ENCODE measurements at regions of chr1 and their contacts with region 1.

Region 1: GRCh38 chr1:28807986-28808385 is 4.0 kb upstream of the OPRD1 start:
- DNase-seq: no peak
- H3K4me3 ChIP-seq: no peak overlapping the region
- H3K27ac ChIP-seq: no peak overlapping the region
- H3K4me1 ChIP-seq: no peaks in the 10 kb centered on the region
- H3K27me3 ChIP-seq: peaks cover 4% of the 10 kb centered on the region; the same call in 1 of the 2 replicates
- CTCF ChIP-seq: no peak

Region 2: GRCh38 chr1:28703629-28704028 is 104.4 kb before region 1 on chr1:
- CTCF ChIA-PET with region 1: no interaction called
- POLR2A ChIA-PET with region 1: no interaction called
- intact Hi-C with region 1: no loop called
- DNase-seq: no peak
- H3K4me3 ChIP-seq: no peak overlapping the region
- H3K27ac ChIP-seq: no peak overlapping the region
- H3K4me1 ChIP-seq: no peaks in the 10 kb centered on the region
- H3K27me3 ChIP-seq: no peaks in the 10 kb centered on the region
- CTCF ChIP-seq: no peak

Region 3: GRCh38 chr1:28835237-28835650 is 27.3 kb after region 1 on chr1:
- CTCF ChIA-PET with region 1: interaction called, 12 read pairs
- POLR2A ChIA-PET with region 1: no interaction called
- intact Hi-C with region 1: no loop called
- DNase-seq: no peak
- H3K4me3 ChIP-seq: no peak overlapping the region
- H3K27ac ChIP-seq: no peak overlapping the region
- H3K4me1 ChIP-seq: no peaks in the 10 kb centered on the region
- H3K27me3 ChIP-seq: no peaks in the 10 kb centered on the region
- CTCF ChIP-seq: no peak

Region 4: DNA sequence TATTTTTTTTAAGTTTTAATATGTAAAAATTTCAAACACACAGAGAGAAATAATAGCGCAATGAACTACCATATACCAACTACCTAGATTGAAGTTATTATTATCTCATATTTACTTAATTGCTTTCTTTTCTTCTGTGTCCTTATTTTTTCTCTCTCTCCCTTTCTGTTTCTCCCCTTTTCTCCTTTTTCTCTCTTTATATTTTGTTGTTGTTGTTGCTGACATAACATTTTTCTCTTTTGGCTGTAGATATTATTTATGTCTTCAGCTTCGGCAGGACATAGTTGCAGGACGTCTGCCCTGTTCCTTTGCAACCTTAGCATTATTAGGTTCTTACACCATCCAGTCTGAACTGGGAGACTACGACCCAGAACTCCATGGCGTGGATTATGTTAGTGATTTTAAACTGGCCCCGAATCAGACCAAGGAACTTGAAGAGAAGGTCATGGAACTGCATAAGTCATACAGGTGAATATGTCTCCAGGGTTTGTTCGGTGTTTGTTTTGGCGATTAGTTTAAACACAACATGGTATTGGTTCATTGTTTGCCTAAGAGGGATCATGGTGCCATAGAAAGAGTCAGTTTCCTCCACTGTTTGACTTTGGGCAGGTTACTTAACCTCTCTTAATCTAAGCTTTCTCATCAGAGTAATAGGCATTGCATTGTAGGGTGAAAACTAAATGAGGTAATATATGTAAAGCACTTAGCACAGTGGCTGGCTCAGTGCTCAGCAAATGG is 210.2 kb after region 1 on chr1:
- CTCF ChIA-PET with region 1: no interaction called
- POLR2A ChIA-PET with region 1: no interaction called
- intact Hi-C with region 1: no loop called
- DNase-seq: no peak
- H3K4me3 ChIP-seq: no peak overlapping the region
- H3K27ac ChIP-seq: no peak overlapping the region
- H3K4me1 ChIP-seq: no peaks in the 10 kb centered on the region
- H3K27me3 ChIP-seq: no peaks in the 10 kb centered on the region
- CTCF ChIP-seq: no peak

Measured in PC-9 (cell line).